Ascending aorta (tissue), 2 donors: ENCODE measurements at regions of chr6 and their contacts with region 1.

Region 1: GRCh38 chr6:20401205-20402091 is at the start of gene E2F3:
- DNase-seq: peak; percentile 100
- H3K4me3 ChIP-seq: peak within 1 kb of the TSS; percentile 83
- H3K27ac ChIP-seq: peak within 1 kb of the TSS; percentile 95
- H3K4me1 ChIP-seq: peaks cover 0 to 3% of the 10 kb centered on the region in 2 donors
- H3K27me3 ChIP-seq: no peaks in the 10 kb centered on the region
- CTCF ChIP-seq: no peak
- total RNA-seq, gene E2F3: 1.1 TPM

Region 2: DNA sequence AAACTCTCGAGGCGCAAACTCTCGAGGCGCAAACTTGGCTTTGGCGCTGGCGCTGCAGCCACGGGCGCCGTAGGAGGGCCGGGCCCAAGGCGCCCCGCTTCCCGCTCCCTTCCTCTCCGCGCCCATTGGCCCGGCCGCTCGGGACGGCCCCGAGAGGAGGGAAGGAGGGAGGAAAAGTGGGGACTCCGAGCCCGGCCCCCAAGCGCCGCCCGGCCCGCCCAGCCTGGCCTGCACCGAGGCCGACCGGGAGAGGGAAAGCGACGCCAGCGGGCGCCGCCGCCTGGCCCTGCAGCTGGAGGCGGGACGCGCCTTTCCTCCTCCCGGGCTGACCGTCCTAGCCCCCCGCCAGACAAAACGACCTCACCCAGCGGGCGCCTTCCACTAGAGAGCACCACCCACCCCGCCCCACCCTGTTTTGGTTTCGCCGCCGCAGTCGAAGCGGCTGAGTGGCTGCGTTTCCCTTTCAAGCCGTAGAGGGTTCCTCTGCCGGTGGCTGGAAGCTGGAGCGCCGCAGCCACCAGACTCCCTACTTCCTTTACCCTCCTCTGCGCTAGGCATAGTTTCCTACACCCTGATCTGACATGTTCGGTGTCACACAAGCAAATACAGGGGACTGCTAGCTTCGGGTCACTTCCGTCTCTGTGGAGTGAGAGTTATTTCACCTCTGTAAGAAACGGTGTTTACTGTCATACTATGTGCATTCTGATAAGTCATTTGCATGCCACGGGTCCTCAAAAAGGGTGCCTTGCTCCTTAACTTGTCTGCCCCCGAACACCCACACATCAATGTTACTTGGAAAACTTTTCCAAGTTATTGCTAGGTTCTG is 188.8 kb before region 1 on chr6 and contains the start of gene MBOAT1:
- intact Hi-C with region 1: loop called (anchors 1 kb)
- DNase-seq: peak; percentile 61 to 94
- H3K4me3 ChIP-seq: peak within 1 kb of the TSS; percentile 84 to 90
- H3K27ac ChIP-seq: peak within 1 kb of the TSS; percentile 85 to 90
- H3K4me1 ChIP-seq: peaks cover 4 to 20% of the 10 kb centered on the region in 2 donors
- H3K27me3 ChIP-seq: no peaks in the 10 kb centered on the region
- CTCF ChIP-seq: no peak
- total RNA-seq, gene MBOAT1: 5.4 TPM

Region 3: GRCh38 chr6:20427856-20428255 is 26.4 kb after region 1 on chr6:
- intact Hi-C with region 1: loop called (anchors 1 kb)
- DNase-seq: no peak
- H3K4me3 ChIP-seq: no peak overlapping the region
- H3K27ac ChIP-seq: peak overlapping the region; percentile 67 to 82
- H3K4me1 ChIP-seq: peaks cover 18 to 24% of the 10 kb centered on the region in 2 donors
- H3K27me3 ChIP-seq: no peaks in the 10 kb centered on the region
- CTCF ChIP-seq: no peak

Region 4: GRCh38 chr6:20483897-20484497 is 82.5 kb after region 1 on chr6:
- intact Hi-C with region 1: loop called (anchors 5 kb)
- DNase-seq: no peak
- H3K4me3 ChIP-seq: no peak overlapping the region
- H3K27ac ChIP-seq: no peak overlapping the region
- H3K4me1 ChIP-seq: no peaks in the 10 kb centered on the region
- H3K27me3 ChIP-seq: no peaks in the 10 kb centered on the region
- CTCF ChIP-seq: no peak

Region 5: GRCh38 chr6:21033575-21034026 is 632.2 kb after region 1 on chr6:
- intact Hi-C with region 1: loop called (anchors 5 kb)
- DNase-seq: peak in 1 of 2 donors; percentile 68
- H3K4me3 ChIP-seq: peak overlapping the region in 1 of 2 donors; percentile 5
- H3K27ac ChIP-seq: peak overlapping the region; percentile 4 to 20
- H3K4me1 ChIP-seq: no peaks in the 10 kb centered on the region
- H3K27me3 ChIP-seq: no peaks in the 10 kb centered on the region
- CTCF ChIP-seq: no peak